PC-9 (cell line): ENCODE measurements at regions of chr16 and their contacts with region 1.

Region 1: DNA sequence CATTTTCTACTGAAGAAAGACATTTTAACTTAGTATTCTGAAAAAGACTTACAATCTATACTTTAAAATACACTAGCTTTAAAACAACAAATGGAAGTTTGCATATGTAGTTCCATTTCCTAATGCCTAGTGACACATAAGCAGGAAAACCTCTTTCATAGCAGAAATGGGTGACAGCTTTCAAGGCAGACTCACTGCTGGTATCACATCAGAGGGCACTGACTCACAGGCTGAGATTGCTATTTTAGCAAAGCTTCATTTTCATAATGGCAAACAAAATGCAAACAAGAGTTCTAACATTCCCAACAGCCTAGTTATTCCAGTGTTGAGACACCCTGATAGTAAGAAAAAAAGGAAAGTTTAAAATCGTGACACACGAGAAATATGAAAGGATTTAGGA is 19.0 kb downstream of the GSPT1 start:
- DNase-seq: peak in 1 of 2 experiments; percentile 46
- H3K4me3 ChIP-seq: no peak overlapping the region
- H3K27ac ChIP-seq: no peak overlapping the region
- H3K4me1 ChIP-seq: no peaks in the 10 kb centered on the region
- H3K27me3 ChIP-seq: no peaks in the 10 kb centered on the region
- CTCF ChIP-seq: no peak

Region 2: GRCh38 chr16:11372073-11372828 is 524.5 kb before region 1 on chr16:
- CTCF ChIA-PET with region 1: interaction called, 13 read pairs
- POLR2A ChIA-PET with region 1: no interaction called
- intact Hi-C with region 1: no loop called
- DNase-seq: peak in 1 of 2 experiments; percentile 9
- H3K4me3 ChIP-seq: no peak overlapping the region
- H3K27ac ChIP-seq: no peak overlapping the region
- H3K4me1 ChIP-seq: no peaks in the 10 kb centered on the region
- H3K27me3 ChIP-seq: no peaks in the 10 kb centered on the region
- CTCF ChIP-seq: peak; percentile 5; the same call in 1 of the 2 replicates

Region 3: DNA sequence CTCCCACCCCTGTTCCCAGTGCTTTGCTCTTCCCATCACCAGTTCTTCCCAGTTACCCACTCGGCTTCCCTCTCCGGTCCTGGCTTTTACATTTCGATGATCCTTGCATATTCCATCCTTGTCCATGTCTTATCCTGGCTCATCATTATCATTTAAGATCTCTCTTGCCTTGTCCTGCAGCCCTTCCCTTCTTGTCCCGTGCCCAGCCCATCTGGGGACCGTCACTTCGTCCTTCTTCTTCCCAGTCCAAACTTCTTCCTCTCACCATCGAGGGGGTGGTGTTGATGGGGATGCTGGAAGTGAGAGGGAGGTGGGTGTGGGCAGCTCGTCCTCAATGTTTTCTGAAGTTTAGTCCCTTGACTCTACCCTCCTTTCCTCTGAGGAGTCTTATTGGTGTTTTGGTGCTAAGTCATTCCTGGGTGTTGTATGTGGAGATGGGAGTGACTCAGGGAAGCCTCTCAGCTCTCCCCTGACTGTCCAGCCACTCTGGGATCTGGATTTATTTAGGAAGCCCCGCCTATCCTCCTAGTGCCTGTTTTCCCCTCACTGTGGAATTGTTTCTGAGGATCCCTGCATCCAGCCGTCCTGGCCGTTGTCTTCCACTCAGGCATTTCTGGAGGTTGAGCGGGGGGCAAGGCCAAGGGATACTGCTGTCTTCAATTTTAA is 80.7 kb after region 1 on chr16:
- CTCF ChIA-PET with region 1: no interaction called
- POLR2A ChIA-PET with region 1: no interaction called
- intact Hi-C with region 1: no loop called
- DNase-seq: peak; percentile 35 to 48
- H3K4me3 ChIP-seq: peak overlapping the region; percentile 93
- H3K27ac ChIP-seq: peak overlapping the region; percentile 44
- H3K4me1 ChIP-seq: peaks cover 19% of the 10 kb centered on the region; the same call in 1 of the 2 replicates
- H3K27me3 ChIP-seq: no peaks in the 10 kb centered on the region
- CTCF ChIP-seq: no peak